Calu3 (cell line): ENCODE measurements at regions of chr3 and their contacts with region 1.

Region 1: GRCh38 chr3:114649331-114649730 is 355.5 kb downstream of the TIGIT start:
- DNase-seq: no peak
- H3K4me3 Mint-ChIP-seq: no peak overlapping the region
- H3K27ac Mint-ChIP-seq: peak overlapping the region; percentile 78
- H3K4me1 Mint-ChIP-seq: peaks cover 35% of the 10 kb centered on the region
- H3K27me3 Mint-ChIP-seq: no peaks in the 10 kb centered on the region
- CTCF ChIP-seq: no peak

Region 2: DNA sequence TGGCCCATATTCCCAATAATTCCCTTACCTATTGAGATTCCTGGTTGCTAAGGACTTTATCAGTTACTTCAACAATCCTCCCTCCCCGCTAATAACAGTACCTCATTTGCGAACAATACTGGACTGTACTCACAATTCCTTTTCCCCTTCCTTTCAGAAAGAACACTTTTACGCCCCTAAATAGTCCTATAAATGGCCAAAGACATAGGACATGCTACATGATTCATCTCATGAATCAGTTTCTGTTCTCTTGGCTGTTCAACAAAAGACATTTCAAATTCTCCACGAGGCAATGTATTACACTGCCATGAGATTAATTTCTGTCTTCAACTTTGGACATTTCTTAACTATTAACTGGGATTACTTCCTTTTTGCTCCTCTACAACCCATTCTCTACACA is 91.1 kb before region 1 on chr3:
- CTCF ChIA-PET with region 1: no interaction called
- intact Hi-C with region 1: loop called (anchors 5 kb)
- DNase-seq: no peak
- H3K4me3 Mint-ChIP-seq: no peak overlapping the region
- H3K27ac Mint-ChIP-seq: peak overlapping the region; percentile 63
- H3K4me1 Mint-ChIP-seq: peaks cover 30% of the 10 kb centered on the region
- H3K27me3 Mint-ChIP-seq: no peaks in the 10 kb centered on the region
- CTCF ChIP-seq: no peak

Region 3: DNA sequence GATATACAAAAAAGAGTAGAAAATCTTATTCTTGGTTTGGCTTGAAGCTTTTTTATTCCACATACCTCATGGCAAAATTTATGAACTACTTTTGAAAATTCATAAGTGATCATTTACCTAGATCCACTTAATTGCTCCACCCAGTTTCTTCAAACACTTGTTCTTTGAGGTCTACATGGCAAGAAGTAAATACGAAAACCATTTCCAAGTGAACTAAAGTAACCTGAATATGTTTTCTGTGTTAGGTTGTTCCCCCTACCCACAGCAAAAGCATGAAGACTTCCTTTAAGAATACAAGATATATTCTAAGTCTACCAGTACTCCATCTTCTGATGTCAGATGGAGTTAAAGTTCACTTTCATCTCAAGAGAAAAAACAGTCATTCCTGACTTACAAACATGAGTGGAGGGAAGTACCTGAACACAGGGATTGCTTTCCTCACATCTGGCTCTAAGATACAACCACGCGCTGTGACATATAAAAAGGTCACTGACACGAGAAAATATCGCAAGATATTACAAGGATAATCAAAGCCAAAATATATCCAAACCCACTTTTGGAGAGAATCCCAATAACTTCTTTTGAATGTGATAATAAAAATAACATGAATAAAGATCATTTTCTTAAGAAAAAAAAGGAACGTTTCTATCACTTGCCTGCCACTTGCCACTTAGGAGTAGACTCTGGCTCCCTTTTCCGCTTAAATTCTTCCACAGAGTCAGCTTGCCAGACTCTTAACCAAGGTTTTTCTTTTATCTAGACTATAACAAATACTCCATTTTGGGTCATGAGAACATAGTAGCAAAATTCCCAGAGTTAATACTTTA is 69.0 kb after region 1 on chr3:
- CTCF ChIA-PET with region 1: no interaction called
- intact Hi-C with region 1: loop called (anchors 5 kb)
- DNase-seq: no peak
- H3K4me3 Mint-ChIP-seq: peak overlapping the region; percentile 50
- H3K27ac Mint-ChIP-seq: peak overlapping the region; percentile 53
- H3K4me1 Mint-ChIP-seq: peaks cover 79% of the 10 kb centered on the region
- H3K27me3 Mint-ChIP-seq: no peaks in the 10 kb centered on the region
- CTCF ChIP-seq: no peak

Region 4: DNA sequence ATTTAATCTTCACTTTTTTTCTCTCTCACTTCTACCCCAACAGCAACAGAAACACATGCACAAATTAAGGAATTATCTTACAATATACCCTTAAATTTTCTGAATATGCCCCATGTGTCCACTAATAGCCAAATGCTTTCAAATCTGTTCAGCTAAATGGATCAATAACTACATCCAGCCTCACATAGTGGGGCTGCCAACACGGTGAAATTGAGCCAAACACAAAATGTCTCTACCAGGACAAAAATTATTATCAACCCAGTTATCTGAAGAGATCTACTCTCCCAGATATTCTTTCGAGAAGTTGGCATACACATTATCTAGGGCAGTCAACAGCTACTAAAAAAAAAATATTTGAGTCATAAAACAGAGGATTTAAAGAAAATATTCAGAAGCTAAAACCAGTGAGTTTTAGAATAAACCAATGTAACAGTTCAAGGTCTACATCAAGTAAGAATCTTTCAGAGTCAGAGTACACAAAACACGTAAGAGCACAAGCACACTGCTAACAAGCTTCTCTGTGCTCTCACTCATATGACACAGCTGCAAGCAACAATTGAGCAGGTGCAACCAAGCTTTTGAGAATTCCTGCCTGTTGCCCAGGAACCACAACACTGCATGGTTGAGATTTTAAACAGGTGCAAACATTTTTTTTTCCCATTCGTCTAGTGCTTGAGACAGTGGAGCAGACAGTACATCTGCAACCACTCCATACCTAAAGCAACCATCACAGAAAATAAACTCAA is 250.0 kb after region 1 on chr3:
- CTCF ChIA-PET with region 1: no interaction called
- intact Hi-C with region 1: no loop called
- DNase-seq: peak; percentile 40
- H3K4me3 Mint-ChIP-seq: no peak overlapping the region
- H3K27ac Mint-ChIP-seq: peak overlapping the region; percentile 33
- H3K4me1 Mint-ChIP-seq: peaks cover 27% of the 10 kb centered on the region
- H3K27me3 Mint-ChIP-seq: no peaks in the 10 kb centered on the region
- CTCF ChIP-seq: no peak